Transverse colon (tissue), 4 donors: ENCODE measurements at regions of chr15 and their contacts with region 1.

Region 1: GRCh38 chr15:89750560-89751542 is at the start of gene MESP1:
- DNase-seq: peak; percentile 95
- H3K4me3 ChIP-seq: peak within 1 kb of the TSS; percentile 56 to 73 (median 66)
- H3K27ac ChIP-seq: peak within 1 kb of the TSS; percentile 68 to 86 (median 80)
- H3K4me1 ChIP-seq: peaks cover 6 to 30% (median 27%) of the 10 kb centered on the region in 4 donors
- H3K27me3 ChIP-seq: no peaks in the 10 kb centered on the region
- CTCF ChIP-seq: peak; percentile 71 to 97 (median 83)
- EP300 ChIP-seq: no peak
- POLR2A ChIP-seq: peak; percentile 50
- total RNA-seq, gene MESP1: 8.6 to 13.5 (median 12.5) TPM

Region 2: DNA sequence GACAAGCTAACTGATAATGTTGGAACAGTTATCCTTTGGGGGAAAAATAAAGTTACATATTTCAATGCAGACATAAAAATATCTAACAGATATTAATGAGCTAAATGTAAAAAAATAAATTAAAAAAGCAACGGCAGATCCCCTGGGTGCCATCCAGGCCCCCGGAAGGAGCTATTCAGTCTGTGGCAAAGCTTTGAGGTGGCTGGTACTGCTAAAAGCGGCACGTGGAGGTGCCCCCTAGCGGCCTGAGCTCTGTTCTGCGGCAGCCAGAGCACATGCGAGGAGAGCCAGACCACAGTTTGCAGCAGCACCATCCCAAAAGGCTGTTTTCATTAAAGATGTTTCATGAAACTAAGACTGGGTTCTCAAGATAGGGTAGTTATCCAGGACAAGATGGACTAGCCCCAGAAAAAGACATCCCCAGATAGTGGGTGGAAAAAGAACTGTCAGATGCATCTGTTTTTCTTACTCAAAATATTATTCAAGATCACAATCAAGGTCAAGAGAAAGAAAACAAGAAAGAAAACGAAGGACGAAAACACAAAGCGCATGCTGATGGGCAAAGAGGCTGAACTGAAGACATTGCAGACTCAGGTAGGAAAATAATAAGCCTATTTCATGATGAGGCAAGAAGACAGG is 124.2 kb after region 1 on chr15:
- in situ Hi-C with region 1: loop called in 3 of 4 experiments (anchors 5 to 10 kb)
- intact Hi-C with region 1: no loop called
- DNase-seq: peak; percentile 89
- H3K4me3 ChIP-seq: no peak overlapping the region
- H3K27ac ChIP-seq: no peak overlapping the region
- H3K4me1 ChIP-seq: peaks cover 0 to 12% (median 7%) of the 10 kb centered on the region in 4 donors
- H3K27me3 ChIP-seq: no peaks in the 10 kb centered on the region
- CTCF ChIP-seq: peak; percentile 91 to 98 (median 92)
- EP300 ChIP-seq: no peak
- POLR2A ChIP-seq: no peak

Region 3: GRCh38 chr15:89917442-89918069 is 166.7 kb after region 1 on chr15:
- in situ Hi-C with region 1: no loop called
- intact Hi-C with region 1: no loop called
- DNase-seq: no peak
- H3K4me3 ChIP-seq: no peak overlapping the region
- H3K27ac ChIP-seq: no peak overlapping the region
- H3K4me1 ChIP-seq: peaks cover 0 to 14% (median 2%) of the 10 kb centered on the region in 4 donors
- H3K27me3 ChIP-seq: no peaks in the 10 kb centered on the region
- CTCF ChIP-seq: no peak
- EP300 ChIP-seq: no peak
- POLR2A ChIP-seq: no peak

Region 4: GRCh38 chr15:90086868-90087268 is 336.0 kb after region 1 on chr15:
- in situ Hi-C with region 1: loop called (anchors 10 to 25 kb)
- intact Hi-C with region 1: no loop called
- DNase-seq: peak; percentile 55
- H3K4me3 ChIP-seq: no peak overlapping the region
- H3K27ac ChIP-seq: no peak overlapping the region
- H3K4me1 ChIP-seq: peaks cover 0 to 8% (median 2%) of the 10 kb centered on the region in 4 donors
- H3K27me3 ChIP-seq: no peaks in the 10 kb centered on the region
- CTCF ChIP-seq: peak; percentile 56 to 68 (median 60)
- EP300 ChIP-seq: no peak
- POLR2A ChIP-seq: no peak

Region 5: DNA sequence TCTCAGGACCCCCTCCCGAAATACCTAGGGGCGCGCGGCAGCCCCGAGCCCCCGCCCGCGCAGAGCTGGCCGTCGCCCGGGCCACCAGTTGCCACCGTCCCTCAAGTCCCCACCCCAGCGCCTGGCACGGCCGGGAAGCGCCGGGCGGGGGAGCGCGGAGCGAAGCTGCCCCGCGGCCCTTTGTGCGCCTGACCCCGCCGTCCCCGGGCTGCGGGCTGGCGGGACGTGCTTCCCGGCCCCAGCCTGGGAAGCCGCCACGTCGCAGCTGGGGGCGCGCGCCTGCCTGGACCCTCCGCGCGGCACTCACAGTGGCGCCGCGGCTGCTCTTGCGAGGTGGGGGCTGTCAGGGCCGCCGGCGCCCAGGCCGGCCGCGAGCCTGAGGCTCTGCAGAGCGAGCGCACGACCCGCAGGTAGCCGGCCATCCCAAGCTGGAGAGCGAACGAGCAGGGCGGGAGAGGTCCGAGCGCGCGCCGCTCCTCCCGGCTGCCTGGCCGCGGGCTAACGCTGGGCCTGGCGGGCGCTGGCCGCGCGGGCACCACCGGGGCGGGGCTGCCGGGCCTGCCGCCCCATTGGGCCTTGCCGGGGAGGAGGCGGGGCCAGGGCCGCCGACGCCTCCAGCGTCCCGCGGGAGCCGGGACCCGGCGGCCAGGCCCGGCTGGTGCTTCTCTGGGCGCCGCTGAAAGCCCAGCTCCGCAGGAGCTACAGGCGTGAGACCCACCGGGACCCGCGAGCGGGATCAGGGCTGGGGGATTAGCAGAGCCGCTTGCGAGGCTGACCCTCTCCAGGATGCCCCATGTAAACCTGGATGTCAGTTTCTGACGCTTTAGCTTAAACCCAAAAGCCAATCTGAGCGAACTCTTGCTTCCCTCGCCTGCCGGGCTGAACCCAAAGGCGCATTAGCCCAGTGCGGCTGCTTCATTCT is 351.4 kb after region 1 on chr15 and contains the start of gene IDH2:
- in situ Hi-C with region 1: loop called (anchors 10 to 25 kb)
- intact Hi-C with region 1: no loop called
- DNase-seq: peak; percentile 87
- H3K4me3 ChIP-seq: peak within 1 kb of the TSS; percentile 67 to 93 (median 92)
- H3K27ac ChIP-seq: peak within 1 kb of the TSS; percentile 94 to 99 (median 97)
- H3K4me1 ChIP-seq: peaks cover 10 to 67% (median 60%) of the 10 kb centered on the region in 4 donors
- H3K27me3 ChIP-seq: no peaks in the 10 kb centered on the region
- CTCF ChIP-seq: peak in 2 of 5 experiments; percentile 24 to 31
- EP300 ChIP-seq: no peak
- POLR2A ChIP-seq: peak; percentile 79
- total RNA-seq, gene IDH2: 19.1 to 101 (median 85.1) TPM

Region 6: DNA sequence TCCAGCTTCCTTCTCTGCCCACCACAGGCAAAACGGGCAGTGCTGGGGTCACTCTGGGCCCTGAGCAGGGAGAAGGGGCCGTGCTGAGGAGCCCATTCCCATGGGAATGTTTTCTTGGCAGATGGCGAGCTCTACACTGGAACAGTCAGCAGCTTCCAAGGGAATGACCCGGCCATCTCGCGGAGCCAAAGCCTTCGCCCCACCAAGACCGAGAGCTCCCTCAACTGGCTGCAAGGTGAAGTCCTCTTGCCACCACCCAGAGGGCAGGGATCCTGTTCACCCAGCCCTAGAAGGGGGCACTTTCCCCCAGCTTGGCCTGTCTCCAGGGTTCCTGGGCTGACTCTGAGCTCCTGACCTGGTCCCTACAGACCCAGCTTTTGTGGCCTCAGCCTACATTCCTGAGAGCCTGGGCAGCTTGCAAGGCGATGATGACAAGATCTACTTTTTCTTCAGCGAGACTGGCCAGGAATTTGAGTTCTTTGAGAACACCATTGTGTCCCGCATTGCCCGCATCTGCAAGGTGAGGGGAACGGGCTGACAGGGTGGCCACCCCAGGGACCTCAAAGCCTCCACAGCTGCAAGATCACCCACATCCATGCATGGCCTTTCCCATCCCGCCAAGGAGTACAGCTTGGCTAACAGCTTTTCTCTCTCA is 470.5 kb after region 1 on chr15:
- in situ Hi-C with region 1: no loop called
- intact Hi-C with region 1: loop called (anchors 10 kb)
- DNase-seq: peak; percentile 80
- H3K4me3 ChIP-seq: no peak overlapping the region
- H3K27ac ChIP-seq: peak overlapping the region; percentile 40 to 77 (median 53)
- H3K4me1 ChIP-seq: peaks cover 3 to 14% (median 6%) of the 10 kb centered on the region in 4 donors
- H3K27me3 ChIP-seq: no peaks in the 10 kb centered on the region
- CTCF ChIP-seq: peak; percentile 71 to 85 (median 75)
- EP300 ChIP-seq: no peak
- POLR2A ChIP-seq: no peak